GM18951 (cell line): ENCODE measurements at regions of chr3 and their contacts with region 1.

Region 1: DNA sequence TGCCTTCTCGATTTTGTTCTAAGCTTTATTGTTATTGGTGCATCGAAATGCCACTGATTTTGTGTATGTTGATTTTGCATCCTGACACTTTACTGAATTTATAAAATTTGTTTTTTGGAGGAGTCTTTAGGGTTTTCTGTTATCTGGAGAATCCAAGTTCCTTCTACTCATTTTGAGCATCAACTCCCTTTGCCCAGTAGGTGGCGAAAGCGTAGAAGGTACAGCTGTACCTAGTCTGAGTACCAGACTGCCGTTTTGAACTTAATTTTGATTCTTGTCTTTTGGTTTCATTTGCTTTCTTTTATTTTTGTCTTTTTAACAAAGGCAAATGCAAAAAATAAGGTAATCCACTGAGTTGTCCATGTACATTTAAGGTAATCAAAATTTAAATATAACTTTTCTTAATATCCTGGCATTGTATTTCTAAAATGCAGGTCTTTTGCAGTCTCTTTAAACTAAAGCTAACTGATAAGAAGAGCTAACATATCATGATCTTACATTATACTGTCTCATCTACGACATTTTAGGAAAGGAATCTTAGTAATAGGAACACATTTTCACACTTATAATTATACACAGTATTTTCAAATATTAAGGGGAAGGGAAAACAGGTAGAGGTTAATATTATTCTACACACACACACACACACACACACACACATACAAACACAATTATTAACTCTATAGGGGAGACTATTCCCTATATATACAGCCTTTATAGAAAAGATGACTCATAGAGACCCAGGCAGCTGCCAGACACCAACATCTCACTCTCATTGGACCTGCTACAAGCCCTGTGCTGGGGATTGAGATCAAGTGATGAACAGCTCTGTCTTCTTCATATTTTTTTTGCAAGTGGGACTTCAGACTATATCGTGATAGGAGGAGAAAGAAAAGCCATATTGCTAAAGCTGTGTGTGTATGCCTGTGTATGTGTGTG is 71.7 kb downstream of the SYNPR start:
- POLR2A ChIP-seq: no peak

Region 2: DNA sequence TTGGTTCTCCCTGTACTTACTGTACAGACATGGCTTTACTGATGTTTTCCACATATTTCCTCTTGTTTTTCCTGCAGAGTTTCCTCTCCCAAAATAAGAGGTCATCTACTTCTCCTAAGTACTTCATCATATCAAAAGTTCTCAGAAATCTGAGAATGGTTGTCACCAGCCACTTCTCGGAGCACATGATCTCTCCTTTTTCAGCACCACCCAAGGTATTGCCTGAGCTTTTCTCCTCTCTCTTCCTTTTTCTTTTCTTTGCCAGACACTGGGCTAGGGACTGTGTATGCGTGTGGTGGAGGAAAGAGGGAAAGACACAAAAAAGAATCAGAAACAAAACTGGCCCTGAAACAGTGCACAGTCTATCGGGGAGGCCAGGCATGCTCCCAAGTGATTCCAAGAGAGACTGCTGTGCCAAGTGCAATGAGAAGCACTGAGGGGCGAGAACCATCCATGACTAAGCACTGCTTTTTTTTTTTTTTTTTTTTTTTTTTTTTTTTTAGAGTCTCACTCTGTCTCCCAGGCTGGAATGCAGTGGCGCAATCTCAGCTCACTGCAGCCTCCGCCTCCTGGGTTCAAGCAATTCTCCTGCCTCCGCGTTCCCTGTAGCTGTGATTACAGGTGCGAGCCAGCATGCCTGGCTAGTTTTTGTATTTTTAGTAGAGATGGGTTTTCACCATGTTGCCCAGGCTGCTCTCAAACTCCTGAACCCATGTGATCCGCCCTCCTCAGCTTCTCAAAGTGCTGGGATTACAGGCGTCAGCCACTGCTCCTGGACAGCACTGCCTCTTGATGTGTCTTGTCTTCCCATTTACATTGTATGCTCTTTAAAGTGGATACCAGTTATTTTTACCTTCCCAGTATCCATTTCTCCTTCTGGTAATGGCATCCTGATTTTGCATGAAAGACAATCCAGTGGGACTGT is 782.5 kb before region 1 on chr3:
- in situ Hi-C with region 1: no loop called
- POLR2A ChIP-seq: no peak

Region 3: DNA sequence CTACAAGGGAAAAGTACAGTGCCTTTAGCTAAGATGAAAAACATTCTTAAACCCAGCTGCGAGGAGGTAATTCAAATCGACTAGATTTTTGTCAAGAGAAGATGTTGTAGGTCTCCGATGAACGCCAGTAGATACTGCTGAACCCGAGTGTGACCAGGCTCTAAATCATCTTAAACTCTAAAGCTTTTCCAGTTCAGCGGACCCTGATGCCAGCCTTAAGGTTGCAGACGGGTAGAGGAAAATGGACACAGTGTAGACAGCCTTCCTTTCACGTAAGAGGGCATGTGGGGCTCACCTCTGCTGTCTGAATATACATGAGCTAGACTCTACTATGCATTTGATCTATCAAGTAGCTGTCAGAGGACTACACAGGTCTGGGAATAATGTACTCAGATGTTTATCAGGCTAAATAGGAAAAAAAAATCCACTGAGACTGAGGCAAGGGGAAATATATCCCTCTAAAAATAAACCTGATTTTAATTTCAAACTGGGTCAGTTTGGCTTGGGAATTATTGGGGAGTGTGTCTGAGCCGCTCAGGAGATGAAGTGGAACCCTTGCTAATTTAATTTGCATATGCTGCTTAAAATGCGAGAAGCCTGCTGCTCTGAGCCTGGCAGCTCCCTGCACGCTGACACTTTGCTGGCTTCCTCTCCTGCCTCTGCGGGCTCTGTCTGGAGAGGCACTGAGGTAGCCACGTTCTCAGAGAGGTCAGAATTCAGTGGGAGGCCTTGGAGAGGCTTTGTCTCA is 626.5 kb before region 1 on chr3:
- in situ Hi-C with region 1: no loop called
- POLR2A ChIP-seq: no peak

Region 4: GRCh38 chr3:63818281-63819150 is 468.7 kb after region 1 on chr3:
- in situ Hi-C with region 1: loop called (anchors 5 kb)
- POLR2A ChIP-seq: no peak

Region 5: DNA sequence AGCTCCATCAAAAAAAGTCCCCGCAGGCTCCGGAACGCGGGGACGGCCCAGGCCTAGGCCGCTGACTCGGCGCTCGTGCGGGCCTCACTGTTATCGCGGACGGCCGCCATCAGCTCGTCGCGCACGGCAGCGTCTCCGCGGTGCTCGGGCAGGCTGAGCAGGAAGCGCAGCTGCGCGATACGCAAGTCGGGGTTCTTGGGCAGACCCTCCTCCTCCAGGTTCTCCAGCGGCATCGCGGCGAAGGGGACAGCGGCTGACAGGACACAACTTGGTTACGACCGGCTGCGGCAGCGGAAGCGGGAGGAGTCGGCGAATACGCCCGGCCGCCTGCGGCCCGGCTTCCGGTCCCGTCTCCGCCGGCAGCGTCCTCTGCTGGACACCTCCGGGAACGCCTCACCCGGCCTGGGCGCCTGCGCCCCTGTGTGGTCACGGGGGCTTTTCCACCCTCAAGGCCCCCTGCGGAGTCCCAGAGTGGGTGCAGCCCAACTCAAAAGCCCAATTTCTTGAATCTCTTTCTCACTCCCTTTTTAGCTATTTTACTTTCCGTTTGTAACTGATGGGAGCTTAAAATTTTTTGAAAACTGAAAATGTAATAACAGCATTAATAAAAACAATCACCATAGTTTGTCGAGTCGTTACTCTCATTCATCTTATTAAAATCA is 673.5 kb after region 1 on chr3 and contains the start of gene PSMD6:
- in situ Hi-C with region 1: loop called (anchors 25 kb)
- POLR2A ChIP-seq: peak; percentile 82